Activated CD4-positive, alpha-beta T cell treated with anti-CD3 and anti-CD28 coated beads for 36 hours (primary cell): ENCODE measurements at regions of chr2 and their contacts with region 1.

Region 1: GRCh38 chr2:85132834-85133637 is at the start of gene TCF7L1:
- DNase-seq: peak; percentile 67
- ATAC-seq: peak; percentile 77
- H3K4me3 Mint-ChIP-seq: peak within 1 kb of the TSS; percentile 53
- H3K27ac Mint-ChIP-seq: no peak within 1 kb of the TSS
- H3K4me1 Mint-ChIP-seq: peaks cover 9% of the 10 kb centered on the region
- H3K27me3 Mint-ChIP-seq: peaks cover 49% of the 10 kb centered on the region
- total RNA-seq, gene TCF7L1: 0.07 TPM in 1 of 2 experiments, not detected in the other

Region 2: GRCh38 chr2:85053802-85054201 is 79.2 kb before region 1 on chr2:
- CTCF ChIA-PET with region 1: no interaction called
- POLR2A ChIA-PET with region 1: no interaction called
- intact Hi-C with region 1: no loop called
- DNase-seq: peak; percentile 41
- ATAC-seq: peak; percentile 73
- H3K4me3 Mint-ChIP-seq: no peak overlapping the region
- H3K27ac Mint-ChIP-seq: no peak overlapping the region
- H3K4me1 Mint-ChIP-seq: peaks cover 37% of the 10 kb centered on the region
- H3K27me3 Mint-ChIP-seq: no peaks in the 10 kb centered on the region

Region 3: DNA sequence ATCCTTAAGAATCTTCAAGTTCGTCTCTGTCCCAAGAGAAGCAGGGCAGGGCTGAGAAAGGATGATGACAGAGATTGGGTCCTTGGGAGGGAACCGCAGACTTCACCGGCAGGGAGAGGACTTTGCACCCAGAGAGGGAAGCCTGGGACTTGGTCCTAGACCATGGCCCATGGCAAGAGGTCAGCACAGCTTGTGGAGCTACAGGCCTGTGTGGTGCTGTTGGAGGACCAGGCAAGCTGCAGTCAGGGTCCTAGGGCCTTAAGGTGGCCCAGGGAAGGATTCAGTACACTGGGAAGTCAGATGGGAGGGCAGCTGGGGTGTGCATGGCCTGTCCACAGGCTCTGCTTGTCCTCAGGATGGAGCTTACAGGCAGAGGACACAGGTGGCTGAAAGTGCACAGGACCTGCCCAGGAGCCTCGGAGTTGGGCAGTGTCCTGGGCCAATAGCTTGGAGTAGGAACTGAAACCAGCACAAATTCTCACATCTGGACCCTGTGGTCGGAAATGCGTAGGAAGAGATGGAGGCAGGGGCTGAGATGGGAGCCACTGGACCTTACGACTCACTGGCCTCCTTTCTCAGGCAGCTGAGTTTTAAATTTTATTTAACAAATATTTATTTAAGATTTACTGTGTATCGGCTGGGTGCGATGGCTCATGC is 56.3 kb before region 1 on chr2:
- CTCF ChIA-PET with region 1: no interaction called
- POLR2A ChIA-PET with region 1: no interaction called
- intact Hi-C with region 1: no loop called
- DNase-seq: no peak
- ATAC-seq: no peak
- H3K4me3 Mint-ChIP-seq: no peak overlapping the region
- H3K27ac Mint-ChIP-seq: no peak overlapping the region
- H3K4me1 Mint-ChIP-seq: no peaks in the 10 kb centered on the region
- H3K27me3 Mint-ChIP-seq: peaks cover 11% of the 10 kb centered on the region

Region 4: GRCh38 chr2:85119900-85120299 is 13.1 kb before region 1 on chr2:
- CTCF ChIA-PET with region 1: interaction called, 8 read pairs
- POLR2A ChIA-PET with region 1: no interaction called
- intact Hi-C with region 1: loop called in 1 of 2 experiments (anchors 2 kb)
- DNase-seq: no peak
- ATAC-seq: no peak
- H3K4me3 Mint-ChIP-seq: no peak overlapping the region
- H3K27ac Mint-ChIP-seq: no peak overlapping the region
- H3K4me1 Mint-ChIP-seq: no peaks in the 10 kb centered on the region
- H3K27me3 Mint-ChIP-seq: peaks cover 2% of the 10 kb centered on the region